ENCODE measurements at regions of chr7 and their contacts with region 1.

Region 1: GRCh38 chr7:134690016-134690415 is 43.4 kb downstream of the BPGM start:
- DNase-seq: peak in 1 of 3 donors; percentile 38
- ATAC-seq: peak; percentile 81 to 83
- H3K4me3 ChIP-seq: no peak overlapping the region
- H3K27ac ChIP-seq: no peak overlapping the region
- H3K4me1 ChIP-seq: peaks cover 6% of the 10 kb centered on the region
- H3K27me3 ChIP-seq: no peaks in the 10 kb centered on the region

Region 2: DNA sequence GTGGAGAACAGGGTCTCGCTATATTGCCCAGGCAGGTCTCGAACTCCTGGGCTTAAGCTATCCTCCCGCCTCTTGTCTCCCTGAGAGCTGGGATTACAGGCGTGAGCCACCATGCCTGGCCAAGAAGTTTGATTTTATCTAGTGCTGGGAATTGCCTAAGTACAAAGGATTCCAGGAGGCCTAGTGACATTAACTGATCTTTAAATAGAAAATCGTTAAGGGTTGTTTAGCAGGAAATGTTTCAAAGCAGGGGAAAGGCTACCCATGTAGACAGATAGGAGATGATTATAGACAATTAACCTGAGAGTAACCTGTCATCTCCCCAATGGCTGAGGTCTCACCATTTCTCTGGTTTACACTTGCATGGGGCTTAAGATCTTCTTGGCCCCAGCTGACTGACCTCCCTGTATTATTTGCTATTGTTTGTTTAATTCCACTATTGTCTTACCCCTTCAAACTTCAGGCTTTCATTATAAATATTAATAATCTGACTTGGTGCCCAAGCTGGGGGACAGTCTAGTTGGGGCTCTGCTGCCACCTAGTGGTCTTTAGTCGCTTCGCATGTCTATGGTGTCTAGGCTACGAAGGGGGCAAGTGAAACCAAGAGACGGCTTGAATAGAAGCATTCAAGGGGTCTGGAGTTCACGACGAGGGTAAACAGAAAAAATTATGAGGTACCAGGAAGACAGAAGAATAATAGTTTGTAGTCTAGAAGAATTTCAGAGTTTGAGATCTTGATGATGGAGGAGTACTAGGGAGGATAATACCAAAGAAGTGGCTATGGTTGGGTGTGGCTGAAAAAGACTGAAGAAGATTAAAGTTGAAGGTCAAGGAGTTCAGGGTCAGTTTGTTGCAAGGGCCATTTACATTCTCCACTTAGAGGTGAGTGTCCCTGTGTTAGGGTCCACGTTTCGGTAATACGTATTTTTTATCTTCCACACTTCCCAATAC is 83.8 kb before region 1 on chr7:
- intact Hi-C with region 1: no loop called
- DNase-seq: peak; percentile 56 to 81 (median 75)
- ATAC-seq: peak; percentile 92 to 93
- H3K4me3 ChIP-seq: no peak overlapping the region
- H3K27ac ChIP-seq: no peak overlapping the region
- H3K4me1 ChIP-seq: no peaks in the 10 kb centered on the region
- H3K27me3 ChIP-seq: no peaks in the 10 kb centered on the region

Region 3: DNA sequence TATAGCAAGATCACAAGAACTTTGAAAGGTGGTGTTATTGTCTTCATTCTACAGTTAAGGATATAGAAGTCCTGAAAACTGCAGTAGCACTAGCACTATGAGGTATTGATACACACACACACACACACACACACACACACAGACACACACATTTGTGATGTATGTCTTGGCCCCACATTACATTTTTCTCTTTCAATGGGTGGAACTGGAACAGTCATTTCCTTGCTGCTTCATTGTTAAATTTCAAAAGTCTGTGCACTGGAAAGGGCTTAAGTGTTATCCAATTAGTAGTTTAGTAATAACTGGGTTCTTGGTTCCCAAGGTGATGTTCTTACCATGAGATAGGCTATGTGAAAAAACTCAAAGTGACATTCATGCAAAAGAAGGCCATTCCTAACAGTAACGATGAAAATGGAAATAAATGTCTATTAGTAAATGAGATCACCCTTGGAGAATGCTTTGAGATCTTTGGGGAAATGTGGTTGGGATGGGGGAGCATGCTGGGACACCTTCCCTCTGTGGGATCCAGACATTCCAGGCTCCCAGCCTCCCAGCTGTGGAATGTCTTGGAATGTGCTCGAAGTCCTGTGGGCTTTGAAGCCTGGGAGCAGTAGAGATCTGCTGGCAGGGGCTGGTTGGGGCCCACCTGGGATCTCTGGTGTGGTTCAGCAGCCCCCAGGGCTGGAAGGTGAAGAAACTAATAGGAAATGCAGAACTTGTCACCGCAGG is 52.1 kb after region 1 on chr7:
- intact Hi-C with region 1: loop called in 2 of 4 experiments (anchors 5 to 10 kb)
- DNase-seq: peak in 1 of 3 donors; percentile 38
- ATAC-seq: peak in 1 of 2 donors; percentile 84
- H3K4me3 ChIP-seq: no peak overlapping the region
- H3K27ac ChIP-seq: peak overlapping the region; percentile 61
- H3K4me1 ChIP-seq: peaks cover 4% of the 10 kb centered on the region
- H3K27me3 ChIP-seq: no peaks in the 10 kb centered on the region

Region 4: DNA sequence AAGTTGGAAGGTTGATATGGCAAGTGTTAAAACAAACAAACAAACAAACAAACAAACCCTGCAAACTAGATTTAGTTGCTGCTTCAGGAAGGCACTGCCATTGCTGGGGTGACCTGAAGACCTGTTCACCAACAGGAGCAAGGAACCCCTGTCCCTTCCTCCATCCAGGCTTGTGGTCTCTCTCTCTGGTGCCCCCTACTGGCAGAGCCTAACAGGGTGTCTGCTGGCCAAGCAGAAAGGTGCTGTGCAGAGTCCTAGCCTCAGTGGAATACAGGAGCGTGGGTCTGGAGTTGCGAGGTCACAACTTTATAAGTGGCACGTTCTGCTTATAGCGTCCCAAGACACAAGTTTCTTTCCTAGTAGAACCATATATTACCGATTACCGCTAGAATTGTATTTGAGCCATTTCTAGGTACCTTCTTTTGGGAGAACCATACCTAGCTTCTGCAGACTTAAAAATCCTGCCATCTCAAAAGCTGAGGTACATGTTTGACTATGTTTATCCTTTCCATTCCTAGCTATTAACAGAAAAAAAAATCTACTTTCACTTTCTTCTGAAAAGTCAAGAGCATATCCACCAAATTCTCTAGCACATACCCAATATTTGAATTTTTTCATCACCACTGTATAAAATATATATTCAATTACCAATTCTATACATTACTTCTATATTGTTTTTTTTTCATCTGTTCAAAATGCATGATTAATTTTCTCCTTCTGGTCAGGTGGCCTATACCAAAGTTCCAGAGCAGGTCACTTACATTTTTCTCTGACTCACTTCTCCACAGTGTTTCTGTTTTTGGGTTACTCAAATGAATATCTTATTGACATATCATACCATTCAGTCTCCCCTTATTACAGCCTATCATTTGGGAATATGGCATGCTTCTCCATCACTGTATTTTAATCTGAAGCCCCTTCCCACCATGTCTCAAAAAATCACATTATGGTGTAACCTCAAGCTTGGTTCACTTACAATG is 60.4 kb after region 1 on chr7:
- intact Hi-C with region 1: loop called in 3 of 4 experiments (anchors 10 kb)
- DNase-seq: peak; percentile 45 to 70 (median 56)
- ATAC-seq: peak; percentile 69 to 81
- H3K4me3 ChIP-seq: no peak overlapping the region
- H3K27ac ChIP-seq: no peak overlapping the region
- H3K4me1 ChIP-seq: no peaks in the 10 kb centered on the region
- H3K27me3 ChIP-seq: no peaks in the 10 kb centered on the region

Region 5: GRCh38 chr7:134804351-134804750 is 114.3 kb after region 1 on chr7:
- intact Hi-C with region 1: no loop called
- DNase-seq: no peak
- ATAC-seq: no peak
- H3K4me3 ChIP-seq: no peak overlapping the region
- H3K27ac ChIP-seq: no peak overlapping the region
- H3K4me1 ChIP-seq: no peaks in the 10 kb centered on the region
- H3K27me3 ChIP-seq: no peaks in the 10 kb centered on the region

Region 6: DNA sequence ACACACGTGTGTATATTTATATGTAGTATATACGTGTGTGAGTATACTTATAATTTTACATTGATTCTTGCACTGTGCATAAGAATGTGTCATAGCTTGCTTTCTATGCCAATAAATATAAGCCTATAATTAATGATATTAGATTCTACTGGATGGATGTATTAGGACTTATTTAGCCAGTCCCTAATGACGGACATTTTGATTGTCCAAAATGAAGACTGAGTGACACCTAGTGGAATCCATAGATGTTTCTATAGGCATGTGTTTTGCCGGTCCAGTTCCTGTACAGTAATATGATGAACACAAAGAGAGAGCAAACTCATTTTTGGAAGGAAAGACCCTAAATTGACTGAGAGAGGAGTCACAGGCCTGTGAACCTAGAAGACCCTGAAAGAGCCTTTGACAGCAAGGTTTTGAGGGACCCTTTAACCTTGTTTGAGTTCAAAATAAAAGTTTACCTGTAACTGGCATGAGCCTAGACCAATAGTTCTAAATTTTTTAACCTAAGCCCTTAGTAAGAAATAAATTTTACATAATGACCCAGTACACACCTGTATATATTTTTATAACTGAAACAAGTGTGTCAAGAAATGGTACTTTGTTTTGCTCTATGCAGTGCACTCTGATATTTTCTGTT is 253.9 kb after region 1 on chr7:
- intact Hi-C with region 1: loop called in 2 of 4 experiments (anchors 5 kb)
- DNase-seq: no peak
- ATAC-seq: no peak
- H3K4me3 ChIP-seq: no peak overlapping the region
- H3K27ac ChIP-seq: no peak overlapping the region
- H3K4me1 ChIP-seq: peaks cover 4% of the 10 kb centered on the region
- H3K27me3 ChIP-seq: no peaks in the 10 kb centered on the region

Region 7: GRCh38 chr7:134954197-134955082 is 264.4 kb after region 1 on chr7:
- intact Hi-C with region 1: loop called in 3 of 4 experiments (anchors 5 kb)
- DNase-seq: no peak
- ATAC-seq: peak in 1 of 2 donors; percentile 38
- H3K4me3 ChIP-seq: no peak overlapping the region
- H3K27ac ChIP-seq: no peak overlapping the region
- H3K4me1 ChIP-seq: no peaks in the 10 kb centered on the region
- H3K27me3 ChIP-seq: no peaks in the 10 kb centered on the region

Region 8: GRCh38 chr7:135169141-135169960 is 479.3 kb after region 1 on chr7:
- intact Hi-C with region 1: loop called in 1 of 4 experiments (anchors 10 kb)
- DNase-seq: peak in 2 of 3 donors; percentile 64 to 69
- ATAC-seq: no peak
- H3K4me3 ChIP-seq: peak overlapping the region; percentile 71
- H3K27ac ChIP-seq: peak overlapping the region; percentile 94
- H3K4me1 ChIP-seq: peaks cover 24% of the 10 kb centered on the region
- H3K27me3 ChIP-seq: no peaks in the 10 kb centered on the region